ENCODE measurements at regions of chr7 and their contacts with region 1.

Region 1: DNA sequence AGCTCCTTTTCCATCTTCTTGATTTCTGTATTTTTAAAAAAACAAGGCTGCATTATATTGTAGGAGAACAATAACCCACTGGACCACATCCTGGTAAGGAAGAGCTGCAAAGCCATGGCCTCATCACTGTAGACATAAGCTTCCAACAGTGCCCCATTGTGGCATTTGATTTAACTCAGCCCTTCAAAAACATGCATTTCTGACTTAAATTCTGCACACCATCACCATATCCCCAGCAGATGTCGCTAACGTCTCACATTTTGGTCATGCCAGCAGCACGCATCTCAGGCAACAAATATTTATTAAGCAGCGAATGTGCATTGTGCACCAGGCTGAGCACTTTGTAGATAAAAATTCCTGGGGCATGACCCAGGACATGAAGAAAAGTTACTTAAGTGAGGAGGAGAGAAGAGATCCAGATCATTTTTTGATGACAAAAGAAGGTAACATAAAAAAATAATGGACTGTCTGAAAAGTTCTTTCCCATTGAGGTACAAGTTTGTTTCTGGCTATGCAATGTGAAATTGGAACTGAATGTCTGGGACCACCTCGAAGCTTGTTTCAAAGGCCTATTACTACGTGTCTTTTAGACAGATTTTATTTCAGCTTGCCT is 164.6 kb upstream of the CDCA7L start:
- DNase-seq: peak; percentile 72
- H3K4me3 ChIP-seq: no peak overlapping the region
- H3K27ac ChIP-seq: no peak overlapping the region
- H3K4me1 ChIP-seq: no peaks in the 10 kb centered on the region
- H3K27me3 ChIP-seq: no peaks in the 10 kb centered on the region
- CTCF ChIP-seq: peak; percentile 80 to 95 (median 88)
- POLR2A ChIP-seq: no peak

Region 2: DNA sequence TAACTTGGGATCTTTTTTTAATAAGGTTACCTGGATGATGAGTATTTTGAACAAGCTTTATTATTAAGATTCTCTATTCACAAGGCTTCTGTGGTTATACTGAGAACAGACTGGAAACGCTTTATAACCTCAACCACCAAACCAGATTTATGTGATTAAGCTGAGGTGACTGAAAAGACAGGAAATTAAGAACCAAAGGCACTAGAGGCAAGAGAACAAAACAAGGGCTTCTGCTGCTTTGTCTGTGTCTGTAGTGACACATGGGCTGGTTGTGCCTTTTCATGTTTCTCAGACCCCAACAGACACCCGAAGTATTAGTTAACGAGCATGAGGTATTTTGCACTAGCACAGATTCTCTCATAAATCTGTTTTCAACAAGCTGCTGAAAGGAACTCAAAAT is 182.2 kb after region 1 on chr7:
- intact Hi-C with region 1: no loop called
- DNase-seq: no peak
- H3K4me3 ChIP-seq: no peak overlapping the region
- H3K27ac ChIP-seq: no peak overlapping the region
- H3K4me1 ChIP-seq: no peaks in the 10 kb centered on the region
- H3K27me3 ChIP-seq: no peaks in the 10 kb centered on the region
- CTCF ChIP-seq: no peak
- POLR2A ChIP-seq: no peak

Region 3: GRCh38 chr7:22488643-22489462 is 378.5 kb after region 1 on chr7:
- intact Hi-C with region 1: loop called (anchors 2 kb)
- DNase-seq: peak; percentile 71
- H3K4me3 ChIP-seq: no peak overlapping the region
- H3K27ac ChIP-seq: no peak overlapping the region
- H3K4me1 ChIP-seq: no peaks in the 10 kb centered on the region
- H3K27me3 ChIP-seq: no peaks in the 10 kb centered on the region
- CTCF ChIP-seq: peak; percentile 70 to 94 (median 88)
- POLR2A ChIP-seq: no peak